Adrenal gland (tissue), 19 donors: ENCODE measurements at regions of chr17 and their contacts with region 1.

Region 1: DNA sequence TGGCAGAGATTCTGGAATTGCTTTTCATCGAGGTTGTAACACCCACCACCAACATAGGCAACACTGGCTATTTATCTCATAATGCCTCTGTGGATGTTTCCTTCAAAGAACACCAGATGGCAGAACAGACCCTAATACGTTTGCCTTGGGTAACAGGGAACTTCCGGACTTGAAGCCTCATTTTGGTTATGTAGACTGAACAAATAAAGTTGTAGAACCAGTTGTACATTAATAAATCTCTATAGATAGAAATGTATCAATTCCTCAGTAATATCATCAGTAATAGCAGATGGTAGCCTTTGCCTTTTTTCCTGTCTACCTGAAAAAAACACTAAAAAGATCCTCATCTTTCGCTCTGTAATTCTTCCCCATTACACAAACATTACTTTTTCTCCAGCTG is 25.9 kb upstream of the APOH start:
- DNase-seq: peak in 6 of 7 donors; percentile 31 to 61 (median 44)
- H3K4me3 ChIP-seq: no peak overlapping the region
- H3K27ac ChIP-seq: no peak overlapping the region
- H3K4me1 ChIP-seq: no peaks in the 10 kb centered on the region
- H3K27me3 ChIP-seq: no peaks in the 10 kb centered on the region
- CTCF ChIP-seq: peak; percentile 35 to 90 (median 82)
- POLR2A ChIP-seq: no peak

Region 2: DNA sequence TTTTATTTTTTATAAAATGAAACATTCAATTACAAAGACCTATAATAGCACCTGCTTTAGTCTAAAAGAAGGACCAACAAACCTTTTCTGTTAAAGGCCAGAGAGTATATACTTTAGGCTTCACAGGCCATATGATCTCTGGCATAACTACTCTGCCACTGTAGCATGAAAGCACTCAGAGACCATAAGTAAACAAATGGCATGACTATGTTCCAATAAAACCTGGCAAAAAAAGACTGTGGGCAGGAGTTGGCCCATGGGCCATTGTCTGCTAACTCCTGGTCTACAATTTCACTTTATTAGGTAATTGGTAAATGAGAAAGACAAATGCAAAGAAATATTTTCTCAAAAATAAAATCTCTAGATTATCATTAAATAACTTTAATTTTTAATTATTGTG is 78.1 kb before region 1 on chr17:
- intact Hi-C with region 1: no loop called
- DNase-seq: no peak
- H3K4me3 ChIP-seq: no peak overlapping the region
- H3K27ac ChIP-seq: no peak overlapping the region
- H3K4me1 ChIP-seq: no peaks in the 10 kb centered on the region
- H3K27me3 ChIP-seq: no peaks in the 10 kb centered on the region
- CTCF ChIP-seq: no peak
- POLR2A ChIP-seq: no peak

Region 3: GRCh38 chr17:66322764-66323163 is 67.7 kb after region 1 on chr17:
- intact Hi-C with region 1: no loop called
- DNase-seq: no peak
- H3K4me3 ChIP-seq: no peak overlapping the region
- H3K27ac ChIP-seq: no peak overlapping the region
- H3K4me1 ChIP-seq: peaks cover 7 to 32% of the 10 kb centered on the region in 2 donors
- H3K27me3 ChIP-seq: no peaks in the 10 kb centered on the region
- CTCF ChIP-seq: no peak
- POLR2A ChIP-seq: no peak

Region 4: DNA sequence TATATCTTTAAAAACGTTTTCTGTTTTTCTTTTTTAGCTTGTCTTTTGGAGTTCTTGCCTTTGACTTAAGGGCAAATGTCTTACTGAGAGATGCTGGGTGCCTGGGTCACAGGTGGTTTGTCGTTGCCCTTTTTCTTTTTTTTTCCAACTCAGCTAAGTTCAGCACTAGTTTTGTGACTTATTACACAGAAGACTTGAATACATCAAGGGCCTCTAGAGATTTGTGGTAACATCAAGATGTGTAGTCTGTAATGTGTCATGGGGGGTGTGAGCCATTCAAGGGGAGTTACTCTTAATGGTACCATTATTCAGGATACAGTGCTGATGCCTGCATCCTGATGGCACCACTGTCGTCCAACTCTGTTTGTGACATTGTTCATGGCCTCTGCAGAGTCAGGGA is 142.4 kb after region 1 on chr17:
- intact Hi-C with region 1: no loop called
- DNase-seq: no peak
- H3K4me3 ChIP-seq: no peak overlapping the region
- H3K27ac ChIP-seq: no peak overlapping the region
- H3K4me1 ChIP-seq: peaks cover 5 to 25% of the 10 kb centered on the region in 2 donors
- H3K27me3 ChIP-seq: no peaks in the 10 kb centered on the region
- CTCF ChIP-seq: no peak
- POLR2A ChIP-seq: no peak

Region 5: DNA sequence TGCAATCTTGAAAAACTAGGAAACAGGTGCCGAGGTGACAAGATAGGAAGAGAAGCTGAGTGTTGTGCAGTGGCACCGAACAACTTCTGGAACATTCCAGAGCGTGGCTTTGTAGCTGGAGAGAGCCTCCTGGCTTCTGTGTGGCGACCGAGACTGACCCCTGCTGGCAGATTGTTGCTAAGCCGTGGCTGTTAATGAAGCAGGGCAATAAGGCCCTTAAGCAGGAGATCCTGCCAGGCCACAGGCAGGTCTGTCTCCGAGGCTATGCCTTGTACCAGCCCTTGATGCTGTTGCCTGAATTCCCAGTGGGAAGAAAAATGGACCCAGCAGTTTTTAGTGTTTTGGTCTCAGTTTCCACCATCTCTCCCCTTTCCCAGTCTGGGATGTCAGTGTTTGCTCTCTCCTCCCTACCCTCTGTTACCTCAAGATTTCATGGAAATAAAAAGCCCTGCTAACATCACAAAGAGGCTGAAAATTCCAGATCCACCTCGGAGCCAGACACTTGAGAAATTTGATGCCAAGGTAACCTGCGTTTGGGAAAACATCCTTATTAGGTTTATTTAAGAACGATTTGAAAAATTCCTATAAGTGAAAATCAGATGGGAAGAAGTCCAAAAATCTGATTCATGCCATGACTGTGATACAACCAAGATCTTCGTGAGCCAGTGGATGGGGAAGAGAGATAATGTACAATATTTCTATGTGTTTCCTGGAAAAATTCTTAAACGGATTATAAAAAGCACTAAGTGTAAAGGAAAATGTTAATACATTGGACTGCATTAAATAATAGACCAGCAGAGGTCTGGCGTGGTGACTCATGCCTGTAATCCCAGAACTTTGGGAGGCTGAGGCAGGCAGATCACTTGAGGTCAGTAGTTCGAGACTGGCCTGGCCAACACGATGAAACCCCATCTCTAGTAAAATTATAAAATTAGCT is 312.4 kb after region 1 on chr17:
- intact Hi-C with region 1: loop called in 1 of 2 experiments (anchors 5 kb)
- DNase-seq: peak; percentile 81 to 95 (median 87)
- H3K4me3 ChIP-seq: no peak overlapping the region
- H3K27ac ChIP-seq: peak overlapping the region in 2 of 5 donors; percentile 47 to 66
- H3K4me1 ChIP-seq: peaks cover 0 to 16% of the 10 kb centered on the region in 2 donors
- H3K27me3 ChIP-seq: no peaks in the 10 kb centered on the region
- CTCF ChIP-seq: peak; percentile 82 to 95 (median 90)
- POLR2A ChIP-seq: no peak

Region 6: DNA sequence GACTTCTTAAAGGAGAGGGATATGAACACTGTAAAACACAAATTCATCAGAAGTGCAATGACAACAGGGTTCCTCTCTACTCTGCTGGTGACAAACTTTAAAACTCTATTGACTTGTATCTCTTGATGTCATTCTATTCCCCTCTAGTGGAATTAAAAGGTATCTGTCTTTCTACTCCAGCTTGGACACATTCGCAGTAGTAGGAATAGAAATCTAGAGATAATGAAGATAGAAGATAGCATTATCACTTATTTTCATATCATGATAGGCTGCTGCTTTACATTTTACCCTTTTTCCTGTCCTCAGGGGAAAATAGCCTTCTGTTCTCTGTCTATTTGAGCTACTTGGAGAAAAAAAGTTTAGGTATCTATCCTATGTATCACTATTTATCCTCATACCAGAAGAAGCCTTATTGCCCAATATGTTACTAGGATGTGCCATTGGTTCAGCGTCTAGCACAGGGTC is 370.2 kb after region 1 on chr17:
- intact Hi-C with region 1: loop called in 1 of 2 experiments (anchors 10 kb)
- DNase-seq: no peak
- H3K4me3 ChIP-seq: no peak overlapping the region
- H3K27ac ChIP-seq: no peak overlapping the region
- H3K4me1 ChIP-seq: peaks cover 0 to 21% of the 10 kb centered on the region in 2 donors
- H3K27me3 ChIP-seq: no peaks in the 10 kb centered on the region
- CTCF ChIP-seq: peak; percentile 27 to 68 (median 58)
- POLR2A ChIP-seq: no peak

Region 7: DNA sequence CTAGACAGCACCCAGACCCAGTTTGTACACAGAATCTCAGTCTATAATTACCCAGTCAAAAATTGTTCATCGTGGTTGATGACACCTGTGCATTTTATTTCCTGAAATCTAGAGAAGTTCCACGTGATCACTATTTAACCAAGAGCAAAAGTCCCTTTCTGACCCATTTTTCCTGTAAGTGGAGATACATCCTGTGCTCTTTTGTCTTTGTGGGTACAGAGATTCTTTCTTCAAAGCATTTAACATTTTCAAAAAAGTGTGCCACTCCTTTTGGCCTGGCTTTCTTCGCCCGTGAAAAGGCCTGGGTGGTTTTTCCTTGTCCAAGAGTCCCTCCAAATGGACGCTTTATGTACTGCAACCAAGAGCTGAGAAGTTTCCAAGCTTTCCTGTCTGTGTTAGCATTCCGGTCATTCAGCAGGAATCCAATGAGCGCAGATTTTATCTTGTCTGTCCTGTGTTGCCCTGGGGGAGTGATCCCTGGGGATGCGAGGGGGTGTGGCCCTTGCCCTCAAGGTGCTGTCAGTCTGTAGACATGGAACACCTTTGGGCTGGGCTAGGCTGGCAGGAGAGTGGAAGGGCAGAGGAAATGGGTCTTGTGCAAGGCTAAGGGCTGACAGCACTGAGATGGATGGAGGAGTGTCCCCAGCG is 418.7 kb after region 1 on chr17:
- intact Hi-C with region 1: loop called in 1 of 2 experiments (anchors 10 kb)
- DNase-seq: peak; percentile 41 to 75 (median 43)
- H3K4me3 ChIP-seq: no peak overlapping the region
- H3K27ac ChIP-seq: peak overlapping the region in 2 of 5 donors; percentile 13 to 32
- H3K4me1 ChIP-seq: peaks cover 0 to 4% of the 10 kb centered on the region in 2 donors
- H3K27me3 ChIP-seq: no peaks in the 10 kb centered on the region
- CTCF ChIP-seq: peak; percentile 54 to 75 (median 66)
- POLR2A ChIP-seq: no peak